ENCODE measurements at regions of chr1 and their contacts with region 1.

Region 1: GRCh38 chr1:151839457-151840405 is at the start of gene C2CD4D:
- DNase-seq: peak; percentile 56
- ATAC-seq: peak; percentile 48 to 81
- total RNA-seq, gene C2CD4D: not detected

Region 2: GRCh38 chr1:151443846-151444782 is 395.6 kb before region 1 on chr1:
- intact Hi-C with region 1: loop called in 1 of 2 experiments (anchors 10 kb)
- DNase-seq: peak; percentile 39
- ATAC-seq: peak; percentile 86 to 92

Region 3: GRCh38 chr1:151594143-151594625 is 245.5 kb before region 1 on chr1:
- intact Hi-C with region 1: loop called in 1 of 2 experiments (anchors 5 kb)
- DNase-seq: peak; percentile 78
- ATAC-seq: peak; percentile 57 to 78

Region 4: DNA sequence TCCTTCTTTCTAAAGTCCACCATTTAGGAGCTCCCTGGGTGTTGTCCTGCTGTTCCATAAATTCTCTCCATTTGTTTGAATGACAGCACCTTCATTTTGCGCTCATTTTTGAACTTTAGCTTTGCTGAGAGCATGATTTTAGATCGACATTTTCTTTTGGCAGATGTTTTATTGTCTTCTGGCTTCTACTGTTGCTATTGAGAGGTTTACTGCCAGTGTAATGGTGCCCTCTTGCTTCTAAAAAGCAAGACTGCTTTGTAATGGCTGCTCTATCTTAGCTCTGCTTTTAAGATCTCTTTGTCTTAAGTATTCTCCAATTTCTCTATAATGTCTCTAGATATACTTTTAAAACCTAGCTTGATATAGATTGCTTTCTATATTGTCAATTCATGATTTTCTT is 41.7 kb after region 1 on chr1:
- intact Hi-C with region 1: no loop called
- DNase-seq: no peak
- ATAC-seq: no peak